ENCODE measurements at regions of chr13 and their contacts with region 1.

Region 1: GRCh38 chr13:23928985-23929384 is 31.7 kb upstream of the C1QTNF9B start:
- DNase-seq: peak; percentile 63
- H3K4me3 ChIP-seq: no peak overlapping the region
- H3K27ac ChIP-seq: peak overlapping the region; percentile 59
- H3K4me1 ChIP-seq: peaks cover 20% of the 10 kb centered on the region
- H3K27me3 ChIP-seq: no peaks in the 10 kb centered on the region
- CTCF ChIP-seq: no peak
- POLR2A ChIP-seq: no peak

Region 2: DNA sequence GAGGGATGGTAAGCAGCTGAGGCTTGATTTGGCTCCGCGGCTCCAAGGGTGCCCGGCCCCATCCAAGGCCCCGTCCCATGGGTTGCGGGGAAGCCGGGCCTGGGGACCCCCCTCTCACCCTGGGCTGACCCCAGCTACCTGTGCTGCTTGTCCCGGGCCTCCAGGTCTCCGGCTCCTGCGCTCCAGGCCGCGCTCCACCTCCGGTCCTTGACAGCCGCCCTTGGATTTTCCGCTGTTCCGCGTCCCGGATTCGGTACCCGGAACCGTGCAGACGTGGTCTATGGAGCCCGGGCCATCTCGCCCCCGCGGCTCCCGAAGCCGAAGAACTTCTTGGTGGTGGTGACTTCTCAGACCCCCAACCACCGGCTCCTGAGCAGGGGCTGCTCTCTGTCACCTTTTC is 16.6 kb after region 1 on chr13:
- CTCF ChIA-PET with region 1: no interaction called
- POLR2A ChIA-PET with region 1: no interaction called
- dilution Hi-C with region 1: no loop called
- intact Hi-C with region 1: loop called (anchors 1 kb)
- DNase-seq: no peak
- H3K4me3 ChIP-seq: no peak overlapping the region
- H3K27ac ChIP-seq: no peak overlapping the region
- H3K4me1 ChIP-seq: no peaks in the 10 kb centered on the region
- H3K27me3 ChIP-seq: peaks cover 2 to 9% of the 10 kb centered on the region in 2 experiments
- CTCF ChIP-seq: no peak
- POLR2A ChIP-seq: no peak

Measured in endothelial cell of umbilical vein (primary cell).